GM12878 (cell line): ENCODE measurements at regions of chr5 and their contacts with region 1.

Region 1: GRCh38 chr5:164504141-164504772 is 998.8 kb downstream of the MAT2B start:
- DNase-seq: peak; percentile 5
- ATAC-seq: peak; percentile 75
- H3K4me3 ChIP-seq: no peak overlapping the region
- H3K27ac ChIP-seq: no peak overlapping the region
- H3K4me1 ChIP-seq: no peaks in the 10 kb centered on the region
- H3K27me3 ChIP-seq: no peaks in the 10 kb centered on the region
- CTCF ChIP-seq: peak; percentile 69 to 77 (median 72)
- EP300 ChIP-seq: no peak
- POLR2A ChIP-seq: no peak
- RAD21 ChIP-seq: peak; percentile 88

Region 2: DNA sequence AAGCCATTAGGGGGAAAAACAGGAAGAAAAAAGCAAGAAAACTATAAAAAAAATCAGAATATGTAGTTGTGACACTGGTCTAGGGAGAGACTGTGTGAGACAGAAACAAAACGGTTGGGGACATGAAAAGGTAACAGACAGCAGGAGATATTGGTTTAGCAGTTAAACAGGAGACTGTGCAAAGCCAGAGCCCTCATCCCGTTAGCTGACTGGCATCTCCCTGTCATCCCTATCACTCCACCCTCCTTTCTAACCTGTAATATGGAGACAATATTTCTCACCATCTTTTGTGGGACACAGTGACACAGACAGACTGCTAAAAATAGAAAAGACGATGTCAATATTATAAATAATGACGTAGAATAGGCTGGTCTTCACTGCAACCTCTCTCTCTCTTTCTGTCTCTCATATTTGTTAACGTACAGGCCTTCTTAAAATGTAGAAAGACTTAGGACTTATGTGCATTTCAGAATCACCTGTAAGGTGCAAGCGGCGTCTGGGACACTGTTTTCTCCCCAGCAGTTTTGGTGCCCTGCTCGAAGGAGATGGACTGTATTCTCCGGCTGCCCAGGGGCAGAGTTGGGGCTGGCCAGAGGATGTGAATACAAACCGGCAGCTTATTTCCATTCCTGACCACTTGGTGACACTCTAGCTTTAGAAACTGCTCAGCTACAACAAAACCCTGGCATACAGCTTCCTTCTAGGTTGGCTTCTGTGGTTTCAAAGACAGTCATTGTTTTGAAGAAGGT is 808.3 kb before region 1 on chr5:
- CTCF ChIA-PET with region 1: interaction called, 16 read pairs
- POLR2A ChIA-PET with region 1: no interaction called
- RAD21 ChIA-PET with region 1: interaction called, 17 read pairs
- SMC1A ChIA-PET with region 1: interaction called, 9 read pairs
- in situ Hi-C with region 1: loop called (anchors 5 kb)
- intact Hi-C with region 1: loop called (anchors 5 kb)
- DNase-seq: peak; percentile 8
- ATAC-seq: peak; percentile 99
- H3K4me3 ChIP-seq: no peak overlapping the region
- H3K27ac ChIP-seq: no peak overlapping the region
- H3K4me1 ChIP-seq: no peaks in the 10 kb centered on the region
- H3K27me3 ChIP-seq: no peaks in the 10 kb centered on the region
- CTCF ChIP-seq: peak; percentile 55 to 77 (median 58); a peak in 5 of 6 replicates
- EP300 ChIP-seq: no peak
- POLR2A ChIP-seq: no peak
- RAD21 ChIP-seq: peak; percentile 86

Region 3: DNA sequence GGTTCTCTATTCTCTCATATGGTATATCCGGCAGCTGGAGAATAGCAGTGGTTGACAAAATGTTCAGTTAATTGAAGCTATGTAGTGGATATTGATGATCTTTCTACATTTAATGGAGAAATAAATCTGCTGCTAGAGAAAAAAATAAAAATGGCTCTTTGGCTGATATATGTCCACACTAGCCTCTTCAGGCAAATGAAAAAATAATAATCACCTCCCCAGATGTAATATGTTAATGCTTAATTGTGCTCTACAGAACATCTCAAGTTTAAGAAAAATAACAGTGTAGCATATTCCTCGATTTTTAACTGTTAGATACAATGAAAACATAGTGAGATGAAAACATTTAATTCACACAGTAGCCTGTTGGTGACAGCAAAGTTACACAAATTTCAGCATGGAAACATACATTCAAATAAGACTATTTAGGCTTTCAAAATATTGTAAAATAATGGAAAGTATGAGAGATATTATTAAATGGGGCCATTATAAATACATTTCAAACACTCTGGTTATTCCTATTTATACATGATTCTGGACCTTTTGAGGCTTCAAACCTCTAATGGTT is 455.8 kb before region 1 on chr5:
- CTCF ChIA-PET with region 1: interaction called, 10 read pairs
- POLR2A ChIA-PET with region 1: no interaction called
- RAD21 ChIA-PET with region 1: interaction called, 6 read pairs
- SMC1A ChIA-PET with region 1: interaction called, 15 read pairs
- in situ Hi-C with region 1: no loop called
- intact Hi-C with region 1: no loop called
- DNase-seq: no peak
- ATAC-seq: no peak
- H3K4me3 ChIP-seq: no peak overlapping the region
- H3K27ac ChIP-seq: no peak overlapping the region
- H3K4me1 ChIP-seq: no peaks in the 10 kb centered on the region
- H3K27me3 ChIP-seq: no peaks in the 10 kb centered on the region
- CTCF ChIP-seq: no peak; a peak in 1 of 6 replicates
- EP300 ChIP-seq: no peak
- POLR2A ChIP-seq: no peak
- RAD21 ChIP-seq: no peak

Region 4: GRCh38 chr5:164188733-164189148 is 315.5 kb before region 1 on chr5:
- CTCF ChIA-PET with region 1: no interaction called
- POLR2A ChIA-PET with region 1: no interaction called
- RAD21 ChIA-PET with region 1: no interaction called
- SMC1A ChIA-PET with region 1: no interaction called
- in situ Hi-C with region 1: no loop called
- intact Hi-C with region 1: no loop called
- DNase-seq: no peak
- ATAC-seq: no peak
- H3K4me3 ChIP-seq: no peak overlapping the region
- H3K27ac ChIP-seq: no peak overlapping the region
- H3K4me1 ChIP-seq: no peaks in the 10 kb centered on the region
- H3K27me3 ChIP-seq: no peaks in the 10 kb centered on the region
- CTCF ChIP-seq: no peak
- EP300 ChIP-seq: no peak
- POLR2A ChIP-seq: no peak
- RAD21 ChIP-seq: no peak

Region 5: GRCh38 chr5:164475339-164475977 is 28.8 kb before region 1 on chr5:
- CTCF ChIA-PET with region 1: interaction called, 32 read pairs
- POLR2A ChIA-PET with region 1: interaction called, 3 read pairs
- RAD21 ChIA-PET with region 1: interaction called, 13 read pairs
- SMC1A ChIA-PET with region 1: interaction called, 32 read pairs
- in situ Hi-C with region 1: no loop called
- intact Hi-C with region 1: no loop called
- DNase-seq: no peak
- ATAC-seq: peak; percentile 54; the same call in 1 of the 3 replicates
- H3K4me3 ChIP-seq: no peak overlapping the region
- H3K27ac ChIP-seq: no peak overlapping the region
- H3K4me1 ChIP-seq: no peaks in the 10 kb centered on the region
- H3K27me3 ChIP-seq: no peaks in the 10 kb centered on the region
- CTCF ChIP-seq: peak; percentile 14 to 43 (median 20); a peak in 3 of 6 replicates
- EP300 ChIP-seq: no peak
- POLR2A ChIP-seq: no peak
- RAD21 ChIP-seq: peak; percentile 60

Region 6: GRCh38 chr5:164518052-164518740 is 13.9 kb after region 1 on chr5:
- CTCF ChIA-PET with region 1: interaction called, 41 read pairs
- POLR2A ChIA-PET with region 1: no interaction called
- RAD21 ChIA-PET with region 1: interaction called, 5 read pairs
- SMC1A ChIA-PET with region 1: interaction called, 12 read pairs
- in situ Hi-C with region 1: no loop called
- intact Hi-C with region 1: no loop called
- DNase-seq: no peak
- ATAC-seq: no peak
- H3K4me3 ChIP-seq: no peak overlapping the region
- H3K27ac ChIP-seq: no peak overlapping the region
- H3K4me1 ChIP-seq: no peaks in the 10 kb centered on the region
- H3K27me3 ChIP-seq: no peaks in the 10 kb centered on the region
- CTCF ChIP-seq: no peak
- EP300 ChIP-seq: no peak
- POLR2A ChIP-seq: no peak
- RAD21 ChIP-seq: no peak

Region 7: GRCh38 chr5:164818445-164818844 is 314.2 kb after region 1 on chr5:
- CTCF ChIA-PET with region 1: no interaction called
- POLR2A ChIA-PET with region 1: no interaction called
- RAD21 ChIA-PET with region 1: no interaction called
- SMC1A ChIA-PET with region 1: no interaction called
- in situ Hi-C with region 1: no loop called
- intact Hi-C with region 1: no loop called
- DNase-seq: no peak
- ATAC-seq: no peak
- H3K4me3 ChIP-seq: no peak overlapping the region
- H3K27ac ChIP-seq: no peak overlapping the region
- H3K4me1 ChIP-seq: no peaks in the 10 kb centered on the region
- H3K27me3 ChIP-seq: no peaks in the 10 kb centered on the region
- CTCF ChIP-seq: no peak
- EP300 ChIP-seq: no peak
- POLR2A ChIP-seq: no peak
- RAD21 ChIP-seq: no peak